Right ventricle myocardium superior (tissue), 1 donor: ENCODE measurements at regions of chr1 and their contacts with region 1.

Region 1: GRCh38 chr1:177571485-177572076 is 398.3 kb downstream of the SEC16B start:
- DNase-seq: no peak
- ATAC-seq: no peak

Region 2: DNA sequence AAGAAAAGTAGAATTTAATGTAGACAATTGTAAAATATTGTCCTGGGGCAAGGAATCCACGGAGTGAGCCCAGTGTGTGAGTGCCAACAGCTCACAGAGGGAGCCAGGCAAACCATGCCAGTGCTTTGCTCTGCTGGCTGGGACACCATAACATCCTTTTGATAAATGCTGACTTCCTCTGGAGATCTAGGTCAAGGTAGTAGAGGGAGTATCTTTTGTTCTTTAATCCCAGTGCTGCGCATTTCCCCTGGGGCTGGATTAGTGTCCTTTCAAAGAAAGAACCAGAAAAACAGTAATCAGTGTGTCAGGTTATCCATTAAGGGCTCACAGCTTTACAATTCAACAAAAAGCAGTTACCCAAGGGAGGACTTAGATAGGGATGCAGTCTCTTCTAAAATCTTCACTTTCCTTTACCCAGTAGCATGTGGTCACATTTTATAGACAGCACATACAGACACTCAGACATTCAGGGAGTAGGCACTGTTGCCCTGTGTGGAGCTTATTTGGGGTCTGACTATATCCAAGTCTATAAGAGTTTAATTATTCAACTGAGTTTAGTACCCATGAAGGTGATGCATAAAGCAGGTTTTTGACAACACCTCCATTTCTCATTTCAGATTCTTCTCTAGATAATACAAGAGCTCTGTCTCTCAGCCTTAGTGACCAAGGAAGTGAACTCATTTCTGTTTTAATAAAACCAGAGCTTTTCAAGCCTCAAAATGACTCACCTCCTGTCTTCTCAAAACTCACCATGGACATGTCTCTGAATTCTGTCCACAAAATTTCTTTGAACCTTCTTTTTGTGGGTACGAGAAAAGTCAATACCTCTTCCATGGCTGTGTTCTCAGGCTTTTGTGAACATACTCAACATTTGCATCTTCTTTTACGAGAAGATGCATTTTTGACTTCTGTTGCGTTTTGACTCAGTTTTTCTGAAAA is 185.6 kb before region 1 on chr1:
- intact Hi-C with region 1: no loop called
- DNase-seq: no peak
- ATAC-seq: no peak

Region 3: GRCh38 chr1:177710696-177711620 is 139.4 kb after region 1 on chr1:
- intact Hi-C with region 1: loop called (anchors 5 kb)
- DNase-seq: no peak
- ATAC-seq: no peak